ENCODE measurements at regions of chr17 and their contacts with region 1.

Region 1: GRCh38 chr17:55348749-55349354 is 72.8 kb downstream of the MMD start:
- DNase-seq: peak; percentile 72
- ATAC-seq: peak; percentile 83
- H3K4me3 ChIP-seq: no peak overlapping the region
- H3K27ac ChIP-seq: no peak overlapping the region
- H3K4me1 ChIP-seq: no peaks in the 10 kb centered on the region
- H3K27me3 ChIP-seq: no peaks in the 10 kb centered on the region
- CTCF ChIP-seq: peak; percentile 96

Region 2: DNA sequence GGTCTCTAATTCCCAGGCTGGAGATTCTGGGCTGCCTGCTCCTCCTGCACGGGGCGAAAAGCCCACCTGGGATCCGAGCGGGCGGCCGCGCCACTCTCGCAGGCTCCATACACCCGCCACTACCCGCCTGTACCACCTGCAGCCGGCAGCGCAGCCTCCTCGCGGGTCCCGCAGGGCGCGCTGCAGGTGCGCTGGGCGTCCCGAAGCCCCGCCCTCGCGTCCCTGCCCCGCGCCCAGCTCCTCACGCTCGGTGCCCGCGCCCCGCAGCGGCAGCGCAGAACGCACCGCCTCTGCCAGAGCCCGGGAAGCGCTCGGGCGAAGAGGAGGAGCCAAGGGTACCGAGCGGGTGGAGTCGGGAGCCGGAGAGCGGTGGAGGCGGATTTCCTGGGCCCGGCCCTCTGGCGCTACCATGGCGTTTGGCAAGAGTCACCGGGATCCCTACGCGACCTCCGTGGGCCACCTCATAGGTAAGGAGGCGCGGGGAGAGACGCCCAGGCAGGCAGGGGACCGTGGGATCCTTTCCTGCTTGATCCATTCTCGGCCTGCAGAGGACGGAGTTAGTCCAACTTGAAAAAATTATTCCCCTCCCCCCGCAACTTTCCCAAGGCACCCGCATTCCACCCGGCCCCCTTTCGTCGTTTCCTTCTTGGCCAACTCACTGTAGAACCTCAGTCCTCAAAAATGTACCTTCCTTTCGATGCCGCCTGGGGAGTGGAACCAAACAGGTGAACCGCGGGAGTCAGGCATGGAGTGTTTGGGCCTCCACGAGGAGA is 448.2 kb before region 1 on chr17 and contains the start of gene TOM1L1:
- CTCF ChIA-PET with region 1: no interaction called
- POLR2A ChIA-PET with region 1: no interaction called
- intact Hi-C with region 1: loop called (anchors 10 kb)
- DNase-seq: peak; percentile 96
- ATAC-seq: peak; percentile 90
- H3K4me3 ChIP-seq: no peak within 1 kb of the TSS; the same call in none of the 2 replicates
- H3K27ac ChIP-seq: peak within 1 kb of the TSS; percentile 67
- H3K4me1 ChIP-seq: peaks cover 6% of the 10 kb centered on the region
- H3K27me3 ChIP-seq: no peaks in the 10 kb centered on the region
- CTCF ChIP-seq: peak; percentile 37
- total RNA-seq, gene TOM1L1: 35.4 and 48.1 TPM in 2 replicates

Region 3: DNA sequence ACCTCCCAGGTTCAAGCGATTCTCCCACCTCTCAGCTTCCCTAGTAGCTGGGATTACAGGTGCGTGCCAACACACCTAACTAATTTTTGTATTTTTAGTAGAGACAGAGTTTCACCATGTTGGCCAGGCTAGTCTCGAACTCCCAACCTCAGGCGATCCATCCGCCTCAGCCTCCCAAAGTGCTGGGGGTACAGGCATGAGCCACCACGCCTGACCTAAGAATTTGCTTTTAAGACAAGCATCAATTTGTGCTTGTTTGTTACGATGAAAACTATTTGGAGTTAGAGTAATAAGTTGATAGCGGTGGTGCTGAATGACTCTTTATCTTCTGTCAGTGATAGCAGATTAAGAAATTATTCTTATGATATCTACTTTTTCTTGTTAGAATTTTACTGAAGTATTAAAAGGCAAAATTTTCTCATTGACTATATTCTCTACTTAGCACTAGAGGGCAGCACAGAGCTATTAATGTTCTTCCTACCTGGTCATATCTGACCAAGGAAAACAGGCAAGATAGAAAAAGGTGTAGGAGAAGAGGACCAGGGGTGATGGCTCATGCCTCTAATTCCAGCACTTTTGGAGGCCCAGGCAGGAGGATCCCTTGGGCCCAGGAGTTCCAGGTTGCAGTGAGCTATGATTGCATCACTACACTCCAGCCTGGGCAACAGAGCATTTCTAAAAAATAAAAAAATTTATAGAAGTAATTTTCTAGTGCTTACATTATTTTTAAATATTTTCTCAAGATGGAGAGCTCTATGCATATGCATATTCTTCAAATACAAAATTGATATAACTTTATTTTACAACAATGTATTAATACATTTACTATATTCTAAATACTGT is 355.8 kb before region 1 on chr17:
- CTCF ChIA-PET with region 1: interaction called, 4 read pairs
- POLR2A ChIA-PET with region 1: no interaction called
- intact Hi-C with region 1: loop called (anchors 1 kb)
- DNase-seq: peak; percentile 82
- ATAC-seq: peak; percentile 88
- H3K4me3 ChIP-seq: no peak overlapping the region
- H3K27ac ChIP-seq: no peak overlapping the region
- H3K4me1 ChIP-seq: no peaks in the 10 kb centered on the region
- H3K27me3 ChIP-seq: no peaks in the 10 kb centered on the region
- CTCF ChIP-seq: peak; percentile 81

Region 4: DNA sequence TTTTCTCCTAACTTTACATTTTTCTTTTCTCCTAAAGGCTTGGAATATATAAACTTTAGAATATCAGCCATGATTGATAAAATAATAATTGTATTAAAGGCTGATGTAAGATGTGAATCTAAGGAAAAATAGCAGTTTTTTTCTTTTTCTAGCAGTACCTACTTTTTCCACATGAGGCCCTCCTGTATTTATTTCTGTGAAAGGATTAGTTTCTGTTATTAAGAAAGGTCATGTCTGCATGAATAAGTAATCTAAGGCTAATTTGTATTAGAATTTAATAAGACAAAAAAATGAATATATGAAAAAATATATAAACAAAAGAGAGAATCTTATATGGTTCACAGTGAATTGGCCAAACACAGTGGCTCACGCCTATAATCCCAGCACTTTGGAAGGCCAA is 295.0 kb before region 1 on chr17:
- CTCF ChIA-PET with region 1: no interaction called
- POLR2A ChIA-PET with region 1: no interaction called
- intact Hi-C with region 1: loop called (anchors 1 kb)
- DNase-seq: peak; percentile 39
- ATAC-seq: no peak
- H3K4me3 ChIP-seq: no peak overlapping the region
- H3K27ac ChIP-seq: no peak overlapping the region
- H3K4me1 ChIP-seq: peaks cover 16% of the 10 kb centered on the region
- H3K27me3 ChIP-seq: no peaks in the 10 kb centered on the region
- CTCF ChIP-seq: peak; percentile 75

Region 5: GRCh38 chr17:55289106-55289446 is 59.8 kb before region 1 on chr17:
- CTCF ChIA-PET with region 1: no interaction called
- POLR2A ChIA-PET with region 1: no interaction called
- intact Hi-C with region 1: no loop called
- DNase-seq: no peak
- ATAC-seq: no peak
- H3K4me3 ChIP-seq: no peak overlapping the region
- H3K27ac ChIP-seq: no peak overlapping the region
- H3K4me1 ChIP-seq: 0 out of 2 replicates have a peak, but pooled peaks cover 6% of the 10 kb centered on the region
- H3K27me3 ChIP-seq: no peaks in the 10 kb centered on the region
- CTCF ChIP-seq: no peak

Region 6: GRCh38 chr17:55300479-55301290 is 48.2 kb before region 1 on chr17:
- CTCF ChIA-PET with region 1: interaction called, 14 read pairs
- POLR2A ChIA-PET with region 1: no interaction called
- intact Hi-C with region 1: loop called (anchors 5 kb)
- DNase-seq: no peak
- ATAC-seq: no peak
- H3K4me3 ChIP-seq: no peak overlapping the region
- H3K27ac ChIP-seq: no peak overlapping the region
- H3K4me1 ChIP-seq: no peaks in the 10 kb centered on the region
- H3K27me3 ChIP-seq: 0 out of 2 replicates have a peak, but pooled peaks cover 4% of the 10 kb centered on the region
- CTCF ChIP-seq: no peak

Region 7: DNA sequence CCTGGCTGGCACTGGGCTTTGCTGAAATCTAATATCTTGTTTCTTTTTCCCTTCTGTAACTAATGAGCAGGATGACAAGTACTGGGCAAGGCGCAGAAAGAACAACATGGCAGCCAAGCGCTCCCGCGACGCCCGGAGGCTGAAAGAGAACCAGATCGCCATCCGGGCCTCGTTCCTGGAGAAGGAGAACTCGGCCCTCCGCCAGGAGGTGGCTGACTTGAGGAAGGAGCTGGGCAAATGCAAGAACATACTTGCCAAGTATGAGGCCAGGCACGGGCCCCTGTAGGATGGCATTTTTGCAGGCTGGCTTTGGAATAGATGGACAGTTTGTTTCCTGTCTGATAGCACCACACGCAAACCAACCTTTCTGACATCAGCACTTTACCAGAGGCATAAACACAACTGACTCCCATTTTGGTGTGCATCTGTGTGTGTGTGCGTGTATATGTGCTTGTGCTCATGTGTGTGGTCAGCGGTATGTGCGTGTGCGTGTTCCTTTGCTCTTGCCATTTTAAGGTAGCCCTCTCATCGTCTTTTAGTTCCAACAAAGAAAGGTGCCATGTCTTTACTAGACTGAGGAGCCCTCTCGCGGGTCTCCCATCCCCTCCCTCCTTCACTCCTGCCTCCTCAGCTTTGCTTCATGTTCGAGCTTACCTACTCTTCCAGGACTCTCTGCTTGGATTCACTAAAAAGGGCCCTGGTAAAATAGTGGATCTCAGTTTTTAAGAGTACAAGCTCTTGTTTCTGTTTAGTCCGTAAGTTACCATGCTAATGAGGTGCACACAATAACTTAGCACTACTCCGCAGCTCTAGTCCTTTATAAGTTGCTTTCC is 28.0 kb before region 1 on chr17:
- CTCF ChIA-PET with region 1: no interaction called
- POLR2A ChIA-PET with region 1: no interaction called
- intact Hi-C with region 1: no loop called
- DNase-seq: no peak
- ATAC-seq: no peak
- H3K4me3 ChIP-seq: peak overlapping the region; percentile 29; the same call in 1 of the 2 replicates
- H3K27ac ChIP-seq: no peak overlapping the region
- H3K4me1 ChIP-seq: 0 out of 2 replicates have a peak, but pooled peaks cover 4% of the 10 kb centered on the region
- H3K27me3 ChIP-seq: peaks cover 5% of the 10 kb centered on the region; the same call in 1 of the 2 replicates
- CTCF ChIP-seq: no peak

Region 8: GRCh38 chr17:55334285-55334684 is 14.6 kb before region 1 on chr17:
- CTCF ChIA-PET with region 1: no interaction called
- POLR2A ChIA-PET with region 1: no interaction called
- intact Hi-C with region 1: no loop called
- DNase-seq: no peak
- ATAC-seq: no peak; the same call in 1 of the 2 replicates
- H3K4me3 ChIP-seq: no peak overlapping the region
- H3K27ac ChIP-seq: no peak overlapping the region
- H3K4me1 ChIP-seq: no peaks in the 10 kb centered on the region
- H3K27me3 ChIP-seq: peaks cover under 1% of the 10 kb centered on the region; the same call in 1 of the 2 replicates
- CTCF ChIP-seq: no peak

Measured in PC-3 (cell line).